A549 (cell line): ENCODE measurements at regions of chr9 and their contacts with region 1.

Region 1: GRCh38 chr9:75185585-75186170 is 97.4 kb downstream of the OSTF1 start:
- DNase-seq: peak; percentile 29 to 59
- ATAC-seq: peak; percentile 60 to 89; a peak in 4 of 6 replicates
- H3K4me3 ChIP-seq: no peak overlapping the region
- H3K27ac ChIP-seq: no peak overlapping the region
- H3K4me1 ChIP-seq: peaks cover 9% of the 10 kb centered on the region
- CTCF ChIP-seq: peak; percentile 41
- EP300 ChIP-seq: no peak
- POLR2A ChIP-seq: no peak
- RAD21 ChIP-seq: 0 out of 5 replicates have a peak, but pooled peaks of 1 of the 2 experiments have one; percentile 11

Region 2: DNA sequence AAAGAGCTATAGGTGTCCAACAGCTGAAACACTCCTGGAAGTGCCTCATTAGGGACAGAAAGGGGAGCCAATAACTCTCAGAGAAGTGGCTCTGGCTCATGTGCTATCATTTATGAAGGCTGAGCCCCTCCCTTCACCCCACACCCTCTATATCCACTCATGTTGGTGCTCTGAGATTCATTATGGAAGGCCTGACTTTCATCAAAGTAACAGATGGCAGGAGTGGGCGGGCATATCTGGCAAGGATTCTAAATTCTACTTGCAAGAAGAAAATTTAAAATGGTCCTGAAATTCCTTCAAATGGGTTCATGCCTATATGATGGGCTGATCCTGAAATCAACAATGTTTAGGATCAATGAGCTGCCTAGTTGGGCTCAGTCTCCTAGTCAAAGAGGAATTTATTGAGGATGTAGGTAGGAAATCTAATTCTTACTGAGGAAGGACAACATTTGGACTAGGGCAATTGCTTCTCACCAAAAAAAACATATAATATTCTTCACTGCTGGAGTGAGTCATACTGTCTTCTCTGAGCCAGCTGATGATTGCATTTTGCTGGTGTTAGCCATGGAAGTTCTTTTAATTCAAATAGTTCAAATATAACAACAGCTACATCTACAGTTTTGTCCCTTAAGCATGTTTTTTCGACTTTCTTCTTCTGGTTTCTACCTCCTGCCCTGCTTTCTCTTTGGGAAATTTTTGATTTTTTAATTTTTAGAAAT is 121.2 kb before region 1 on chr9:
- CTCF ChIA-PET with region 1: no interaction called
- POLR2A ChIA-PET with region 1: no interaction called
- DNase-seq: no peak
- ATAC-seq: no peak
- H3K4me3 ChIP-seq: no peak overlapping the region
- H3K27ac ChIP-seq: no peak overlapping the region
- H3K4me1 ChIP-seq: no peaks in the 10 kb centered on the region
- CTCF ChIP-seq: no peak
- EP300 ChIP-seq: no peak
- POLR2A ChIP-seq: no peak
- RAD21 ChIP-seq: no peak

Region 3: GRCh38 chr9:75175395-75175794 is 10.3 kb before region 1 on chr9:
- CTCF ChIA-PET with region 1: interaction called, 17 read pairs
- POLR2A ChIA-PET with region 1: no interaction called
- DNase-seq: no peak
- ATAC-seq: no peak
- H3K4me3 ChIP-seq: no peak overlapping the region
- H3K27ac ChIP-seq: no peak overlapping the region
- H3K4me1 ChIP-seq: no peaks in the 10 kb centered on the region
- CTCF ChIP-seq: no peak
- EP300 ChIP-seq: no peak
- POLR2A ChIP-seq: no peak
- RAD21 ChIP-seq: no peak

Region 4: GRCh38 chr9:75289332-75289731 is 103.7 kb after region 1 on chr9:
- CTCF ChIA-PET with region 1: no interaction called
- POLR2A ChIA-PET with region 1: no interaction called
- DNase-seq: no peak
- ATAC-seq: no peak
- H3K4me3 ChIP-seq: no peak overlapping the region
- H3K27ac ChIP-seq: no peak overlapping the region
- H3K4me1 ChIP-seq: no peaks in the 10 kb centered on the region
- CTCF ChIP-seq: no peak
- EP300 ChIP-seq: no peak
- POLR2A ChIP-seq: no peak
- RAD21 ChIP-seq: no peak